Right ventricle myocardium superior (tissue), 1 donor: ENCODE measurements at regions of chr19 and their contacts with region 1.

Region 1: DNA sequence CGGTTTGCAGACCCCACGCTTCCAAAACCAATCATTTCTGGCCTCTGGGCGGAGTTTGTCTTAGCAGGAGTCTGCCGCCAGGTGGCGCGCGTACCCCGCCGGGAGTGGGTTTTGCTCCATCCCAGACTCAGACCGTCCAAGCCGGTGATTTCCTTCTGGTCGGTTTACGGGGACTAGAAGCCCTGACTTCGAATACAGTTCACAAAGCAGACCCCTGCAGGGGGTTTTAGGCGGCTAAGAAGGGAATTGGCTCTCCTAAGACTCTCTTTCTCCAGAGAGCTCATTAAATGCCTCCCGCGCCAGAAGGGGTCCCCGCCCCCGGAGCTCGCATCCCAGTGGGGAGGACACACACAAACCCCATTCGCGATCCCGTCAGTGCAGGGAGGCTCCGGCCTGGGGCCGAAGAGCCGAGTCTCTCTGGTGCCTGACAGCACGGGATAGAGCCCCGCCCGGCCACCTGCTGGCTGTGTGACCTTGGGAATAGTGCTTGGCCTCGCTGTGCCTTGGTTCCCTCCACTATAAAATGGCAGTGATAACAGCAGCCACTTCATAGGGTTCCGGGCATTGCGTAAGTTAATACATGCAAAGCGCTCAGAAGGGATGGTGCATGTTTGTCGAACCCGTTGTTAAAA is 8.6 kb upstream of the NUP62 start:
- DNase-seq: peak; percentile 87
- ATAC-seq: peak; percentile 93

Region 2: DNA sequence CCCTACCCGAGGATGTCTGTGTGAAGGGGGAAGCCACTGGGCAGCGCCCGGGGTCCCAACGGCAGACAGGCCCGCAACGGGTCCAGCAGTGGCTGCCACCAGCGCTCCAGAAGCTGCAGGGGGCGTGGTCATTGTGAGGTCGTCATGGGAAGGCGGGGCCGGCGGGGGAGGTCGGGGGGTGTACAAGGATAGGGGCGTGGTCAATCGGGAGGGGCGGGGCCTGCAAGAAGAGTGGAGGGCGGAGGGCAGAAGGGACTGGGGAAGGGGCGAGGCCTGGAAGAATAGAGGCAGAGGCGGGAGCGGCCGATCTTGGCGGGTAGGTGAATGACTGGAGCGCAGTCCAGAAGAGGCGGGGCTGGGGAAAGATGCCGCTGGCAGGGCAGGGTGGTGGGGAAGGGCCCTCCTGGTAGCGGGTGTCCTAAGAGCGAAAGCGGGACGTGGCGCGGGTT is 129.1 kb before region 1 on chr19:
- intact Hi-C with region 1: no loop called
- DNase-seq: peak; percentile 95
- ATAC-seq: peak; percentile 78

Region 3: DNA sequence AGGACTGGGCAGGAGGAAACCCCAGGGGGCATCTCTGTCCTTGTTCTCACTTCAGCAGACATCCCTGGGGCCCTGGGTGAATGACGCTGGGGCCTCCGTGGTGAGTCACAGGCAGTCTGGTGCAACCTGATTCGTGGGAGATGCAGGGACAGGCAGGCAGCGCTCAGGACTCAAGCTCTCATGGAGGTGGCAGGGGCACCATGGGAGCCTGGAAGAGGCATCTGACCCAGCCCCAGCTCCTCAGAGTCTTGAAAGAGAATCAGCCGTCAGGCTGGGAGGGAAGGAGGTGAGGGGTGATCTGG is 100.9 kb before region 1 on chr19:
- intact Hi-C with region 1: no loop called
- DNase-seq: no peak
- ATAC-seq: no peak

Region 4: GRCh38 chr19:49983645-49984229 is 45.9 kb after region 1 on chr19:
- intact Hi-C with region 1: loop called (anchors 5 kb)
- DNase-seq: peak; percentile 67
- ATAC-seq: peak; percentile 58

Region 5: DNA sequence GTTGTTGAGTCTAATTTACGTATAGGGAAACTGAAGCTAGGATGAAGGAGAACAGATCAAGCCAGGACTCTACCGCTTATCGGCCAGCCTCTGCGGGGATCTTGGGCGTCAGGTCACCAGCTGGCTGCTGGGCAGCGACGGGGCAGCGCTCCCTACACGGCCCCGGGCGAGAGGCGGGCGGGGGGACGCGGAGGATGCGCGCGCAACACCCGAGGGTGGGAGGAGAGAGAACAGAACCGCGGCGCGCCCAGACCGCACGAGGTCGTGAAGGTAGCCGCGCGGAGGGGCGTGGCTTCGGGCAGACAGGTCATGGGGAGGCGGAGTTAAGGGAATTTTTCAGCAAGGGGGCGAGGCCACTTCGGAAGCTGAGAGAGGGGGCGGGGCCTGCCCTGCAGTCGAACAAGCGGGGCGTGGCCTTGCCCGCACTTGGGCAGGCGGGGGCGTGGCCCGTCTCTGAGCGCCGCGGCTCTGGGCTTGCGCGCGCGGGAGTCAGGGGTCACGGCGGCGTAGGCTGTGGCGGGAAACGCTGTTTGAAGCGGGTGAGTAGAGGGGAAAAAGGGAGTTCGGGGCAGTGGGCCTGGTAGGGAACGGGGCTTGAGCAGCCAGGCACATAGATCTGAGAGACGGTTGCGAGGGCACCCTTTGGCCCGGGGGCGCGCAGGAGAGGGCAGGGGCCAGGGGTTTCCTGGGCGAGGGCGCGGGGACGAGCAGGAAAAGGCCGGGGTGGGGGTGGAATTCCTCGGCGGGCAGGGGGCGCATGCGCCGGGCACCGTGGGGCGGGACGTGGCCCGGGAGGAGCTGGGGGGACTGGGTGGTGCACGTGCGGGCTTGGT is 446.2 kb after region 1 on chr19 and contains the start of gene POLD1:
- intact Hi-C with region 1: no loop called
- DNase-seq: peak; percentile 99
- ATAC-seq: peak; percentile 97
- total RNA-seq, gene POLD1: 7.8 TPM